PC-3 (cell line): ENCODE measurements at regions of chr4 and their contacts with region 1.

Region 1: DNA sequence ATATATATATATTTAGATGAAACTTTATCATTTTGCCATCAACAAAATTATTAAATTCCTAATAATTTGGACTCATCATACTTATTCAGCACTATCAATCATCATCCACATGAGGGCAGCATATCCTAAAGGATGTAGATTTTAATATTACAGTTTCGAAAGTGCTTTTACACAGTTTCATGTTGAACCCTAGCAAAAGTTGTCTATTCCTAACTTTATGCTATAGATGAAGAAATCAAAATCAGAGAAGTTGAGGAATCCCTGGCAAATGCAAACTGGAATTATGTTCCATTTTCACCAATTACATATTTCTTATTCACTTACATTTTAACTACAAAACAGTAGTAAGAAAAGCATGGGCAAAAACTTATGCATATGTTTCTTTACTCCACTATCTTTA is 36.6 kb upstream of the UGT2A1 start:
- DNase-seq: peak; percentile 72
- ATAC-seq: peak; percentile 48; the same call in 1 of the 2 replicates
- H3K4me3 ChIP-seq: no peak overlapping the region
- H3K27ac ChIP-seq: no peak overlapping the region
- H3K4me1 ChIP-seq: no peaks in the 10 kb centered on the region
- H3K27me3 ChIP-seq: no peaks in the 10 kb centered on the region
- CTCF ChIP-seq: peak; percentile 82

Region 2: GRCh38 chr4:69497076-69497475 is 192.5 kb before region 1 on chr4:
- CTCF ChIA-PET with region 1: no interaction called
- POLR2A ChIA-PET with region 1: no interaction called
- intact Hi-C with region 1: no loop called
- DNase-seq: peak; percentile 86
- ATAC-seq: peak; percentile 65
- H3K4me3 ChIP-seq: no peak overlapping the region
- H3K27ac ChIP-seq: peak overlapping the region; percentile 63
- H3K4me1 ChIP-seq: peaks cover 29% of the 10 kb centered on the region
- H3K27me3 ChIP-seq: no peaks in the 10 kb centered on the region
- CTCF ChIP-seq: no peak

Region 3: DNA sequence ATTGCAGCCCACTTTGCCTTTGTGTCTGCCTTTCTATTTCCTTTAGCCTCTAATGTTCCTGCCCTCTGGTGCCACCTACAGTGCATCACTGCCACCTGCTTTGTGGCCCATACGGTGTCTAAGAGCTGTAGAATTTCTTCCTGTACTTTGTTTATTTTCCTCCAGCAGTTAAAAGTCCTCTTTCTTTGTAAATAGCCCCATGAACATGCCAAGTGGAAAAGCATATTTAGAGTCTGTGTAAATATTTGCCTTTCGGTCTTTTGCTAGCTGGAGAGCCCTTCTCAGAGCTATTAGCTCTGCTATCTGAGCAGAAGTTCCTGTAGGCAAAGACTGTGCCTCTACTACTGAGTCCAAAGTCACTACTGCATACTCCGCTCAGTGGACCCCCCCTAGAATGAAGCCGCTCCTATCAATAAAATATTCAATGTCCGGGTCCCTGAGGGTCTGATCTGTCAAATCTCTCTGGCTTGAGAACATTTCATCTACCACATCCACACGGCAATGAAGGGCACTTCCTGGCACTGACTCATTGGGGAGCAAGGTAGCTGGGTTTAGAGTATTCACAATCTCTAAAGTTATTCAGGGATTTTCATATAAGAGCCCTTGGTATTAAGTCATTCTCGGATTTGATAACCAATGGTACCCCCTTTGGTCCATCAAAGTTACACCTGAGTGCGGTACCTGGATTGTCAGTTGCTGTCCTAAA is 134.0 kb after region 1 on chr4:
- CTCF ChIA-PET with region 1: interaction called, 5 read pairs
- POLR2A ChIA-PET with region 1: no interaction called
- intact Hi-C with region 1: loop called (anchors 1 kb)
- DNase-seq: peak; percentile 78
- ATAC-seq: peak; percentile 88
- H3K4me3 ChIP-seq: no peak overlapping the region
- H3K27ac ChIP-seq: peak overlapping the region; percentile 9; the same call in 1 of the 2 replicates
- H3K4me1 ChIP-seq: peaks cover 7% of the 10 kb centered on the region
- H3K27me3 ChIP-seq: no peaks in the 10 kb centered on the region
- CTCF ChIP-seq: peak; percentile 84

Region 4: GRCh38 chr4:69836287-69836686 is 146.7 kb after region 1 on chr4:
- CTCF ChIA-PET with region 1: no interaction called
- POLR2A ChIA-PET with region 1: no interaction called
- intact Hi-C with region 1: no loop called
- DNase-seq: no peak
- ATAC-seq: no peak
- H3K4me3 ChIP-seq: no peak overlapping the region
- H3K27ac ChIP-seq: no peak overlapping the region
- H3K4me1 ChIP-seq: peaks cover under 1% of the 10 kb centered on the region; the same call in 1 of the 2 replicates
- H3K27me3 ChIP-seq: no peaks in the 10 kb centered on the region
- CTCF ChIP-seq: no peak

Region 5: DNA sequence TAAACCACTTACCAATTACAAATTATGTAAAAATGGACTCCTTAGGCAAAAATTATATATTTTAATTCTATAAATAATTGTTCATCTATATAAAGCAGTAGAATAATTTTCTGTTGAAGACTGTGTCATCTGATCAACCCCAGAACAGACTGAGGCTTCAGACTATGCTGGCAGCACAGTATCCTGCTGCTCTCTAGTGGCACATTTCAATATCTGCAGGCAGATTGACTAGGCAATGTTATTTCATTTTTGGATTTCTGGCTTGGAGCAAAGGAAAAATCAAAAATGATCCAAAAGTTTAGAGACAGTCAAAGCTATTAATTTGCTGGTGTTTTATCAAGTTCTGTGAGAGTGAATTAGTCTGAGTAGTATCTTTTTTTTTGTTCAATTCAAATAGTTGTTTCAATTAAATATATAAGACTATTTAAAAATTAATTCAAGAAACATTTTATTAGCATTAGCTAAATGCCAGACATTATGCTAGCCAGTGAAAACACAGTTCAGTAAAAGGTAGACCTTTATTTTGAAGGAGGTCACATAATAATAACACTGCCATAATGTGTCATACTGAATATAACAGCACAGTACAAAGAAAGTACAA is 191.7 kb after region 1 on chr4:
- CTCF ChIA-PET with region 1: interaction called, 4 read pairs
- POLR2A ChIA-PET with region 1: no interaction called
- intact Hi-C with region 1: loop called (anchors 1 kb)
- DNase-seq: peak; percentile 66
- ATAC-seq: peak; percentile 78
- H3K4me3 ChIP-seq: no peak overlapping the region
- H3K27ac ChIP-seq: no peak overlapping the region
- H3K4me1 ChIP-seq: no peaks in the 10 kb centered on the region
- H3K27me3 ChIP-seq: no peaks in the 10 kb centered on the region
- CTCF ChIP-seq: peak; percentile 82

Region 6: DNA sequence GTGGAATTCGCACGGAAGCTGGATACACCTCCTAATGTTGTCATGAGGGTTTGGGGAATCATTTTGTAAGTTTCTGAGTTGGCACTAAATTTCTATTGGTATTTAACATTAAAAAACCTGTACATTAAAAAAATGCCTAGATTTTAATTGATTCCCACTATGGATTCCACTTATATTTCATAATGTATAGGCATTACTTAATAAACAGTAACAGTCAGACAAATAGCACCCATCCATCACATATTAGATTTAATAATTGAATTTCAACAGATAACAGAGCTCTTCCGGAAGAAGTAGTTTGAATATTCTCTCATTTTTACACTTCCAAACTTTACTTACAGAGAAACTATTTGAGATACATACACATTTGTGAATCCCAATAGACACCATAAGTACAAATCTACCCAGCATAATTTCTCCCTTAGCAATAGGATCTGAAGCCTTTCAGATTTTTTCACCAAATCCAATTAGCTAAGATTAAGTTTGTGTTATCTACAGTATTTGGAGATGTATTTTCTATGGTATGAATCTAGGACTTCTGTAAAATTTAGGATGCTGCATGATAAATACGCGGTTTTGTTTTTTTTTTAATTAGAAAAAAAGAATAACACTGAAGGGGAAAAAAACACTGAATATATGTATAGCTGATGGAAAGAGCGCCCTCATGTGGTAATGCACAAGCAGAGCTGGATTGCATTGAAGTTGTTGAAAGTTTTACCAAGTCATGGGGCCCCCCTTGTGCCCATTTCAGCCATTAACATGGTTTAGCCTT is 493.8 kb after region 1 on chr4:
- CTCF ChIA-PET with region 1: no interaction called
- POLR2A ChIA-PET with region 1: no interaction called
- intact Hi-C with region 1: loop called (anchors 5 kb)
- DNase-seq: peak; percentile 71
- ATAC-seq: peak; percentile 70
- H3K4me3 ChIP-seq: no peak overlapping the region
- H3K27ac ChIP-seq: no peak overlapping the region
- H3K4me1 ChIP-seq: no peaks in the 10 kb centered on the region
- H3K27me3 ChIP-seq: peaks cover 27% of the 10 kb centered on the region; the same call in 1 of the 2 replicates
- CTCF ChIP-seq: peak; percentile 95

Region 7: GRCh38 chr4:70505151-70505748 is 815.7 kb after region 1 on chr4:
- CTCF ChIA-PET with region 1: no interaction called
- POLR2A ChIA-PET with region 1: no interaction called
- intact Hi-C with region 1: loop called (anchors 1 kb)
- DNase-seq: peak; percentile 81
- ATAC-seq: peak; percentile 88
- H3K4me3 ChIP-seq: no peak overlapping the region
- H3K27ac ChIP-seq: no peak overlapping the region
- H3K4me1 ChIP-seq: no peaks in the 10 kb centered on the region
- H3K27me3 ChIP-seq: peaks cover 37% of the 10 kb centered on the region
- CTCF ChIP-seq: peak; percentile 98

Region 8: GRCh38 chr4:70559211-70559830 is 869.7 kb after region 1 on chr4:
- CTCF ChIA-PET with region 1: interaction called, 4 read pairs
- POLR2A ChIA-PET with region 1: no interaction called
- intact Hi-C with region 1: loop called (anchors 1 kb)
- DNase-seq: peak; percentile 79
- ATAC-seq: peak; percentile 82
- H3K4me3 ChIP-seq: no peak overlapping the region
- H3K27ac ChIP-seq: no peak overlapping the region
- H3K4me1 ChIP-seq: no peaks in the 10 kb centered on the region
- H3K27me3 ChIP-seq: peaks cover 18% of the 10 kb centered on the region
- CTCF ChIP-seq: peak; percentile 96